Cardiac septum (tissue), 1 donor: ENCODE measurements at regions of chr2 and their contacts with region 1.

Region 1: GRCh38 chr2:234500394-234501006 is 3.6 kb upstream of the ARL4C start:
- DNase-seq: no peak

Region 2: GRCh38 chr2:233566141-233566960 is 934.1 kb before region 1 on chr2 and contains the start of gene USP40:
- intact Hi-C with region 1: loop called (anchors 5 kb)
- DNase-seq: peak; percentile 89
- total RNA-seq, gene USP40: 23.8 TPM

Region 3: GRCh38 chr2:233807215-233807865 is 693.2 kb before region 1 on chr2:
- intact Hi-C with region 1: no loop called
- DNase-seq: no peak

Region 4: GRCh38 chr2:233976690-233977294 is 523.7 kb before region 1 on chr2:
- intact Hi-C with region 1: loop called (anchors 10 kb)
- DNase-seq: peak; percentile 22

Region 5: GRCh38 chr2:234135720-234136221 is 364.7 kb before region 1 on chr2:
- intact Hi-C with region 1: loop called (anchors 1 kb)
- DNase-seq: no peak

Region 6: GRCh38 chr2:234240917-234241316 is 259.6 kb before region 1 on chr2:
- intact Hi-C with region 1: no loop called
- DNase-seq: no peak

Region 7: GRCh38 chr2:234288974-234289455 is 211.5 kb before region 1 on chr2:
- intact Hi-C with region 1: loop called (anchors 2 kb)
- DNase-seq: no peak

Region 8: DNA sequence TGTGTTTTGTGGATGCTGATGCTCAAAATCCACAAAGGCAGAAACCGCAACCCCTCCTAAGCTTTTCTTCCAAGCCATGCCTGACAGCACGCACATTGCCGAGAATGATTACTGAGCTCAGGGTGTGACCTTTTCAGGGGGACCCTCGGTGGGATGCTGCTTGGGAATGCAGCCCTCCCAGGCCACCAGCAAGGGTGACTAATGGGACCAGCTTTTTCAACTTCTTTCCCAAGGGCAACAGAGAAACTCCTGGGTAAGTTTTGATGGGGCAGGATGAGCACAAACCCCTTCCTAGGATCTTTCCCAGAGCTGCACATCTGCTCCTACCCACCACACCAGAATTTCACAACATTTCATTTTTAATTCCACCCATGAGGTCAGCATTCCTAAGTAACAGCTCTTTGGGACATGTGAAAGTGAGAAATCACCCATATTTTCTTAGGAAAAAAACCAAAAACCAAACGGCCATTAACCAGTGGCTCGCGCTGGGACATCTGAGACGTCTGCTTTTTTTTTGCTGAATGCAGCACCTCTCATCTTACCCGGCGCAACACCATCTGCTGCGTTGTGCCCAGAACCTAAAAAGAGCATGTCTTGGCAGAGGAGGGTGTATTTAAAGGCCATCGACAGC is 122.6 kb before region 1 on chr2:
- intact Hi-C with region 1: no loop called
- DNase-seq: no peak

Region 9: GRCh38 chr2:234521536-234521935 is 21.0 kb after region 1 on chr2:
- intact Hi-C with region 1: no loop called
- DNase-seq: no peak